Activated naive CD4-positive, alpha-beta T cell treated with anti-CD3 and anti-CD28 coated beads for 36 hours (primary cell): ENCODE measurements at regions of chr11 and their contacts with region 1.

Region 1: GRCh38 chr11:45655347-45655756 is 10.1 kb downstream of the CHST1 start:
- DNase-seq: peak; percentile 75
- H3K4me3 Mint-ChIP-seq: no peak overlapping the region
- H3K27ac Mint-ChIP-seq: no peak overlapping the region
- H3K4me1 Mint-ChIP-seq: peaks cover 3% of the 10 kb centered on the region
- H3K27me3 Mint-ChIP-seq: peaks cover 15% of the 10 kb centered on the region

Region 2: GRCh38 chr11:45339729-45340519 is 315.4 kb before region 1 on chr11:
- CTCF ChIA-PET with region 1: interaction called, 7 read pairs
- intact Hi-C with region 1: loop called (anchors 1 kb)
- DNase-seq: peak; percentile 96
- H3K4me3 Mint-ChIP-seq: peak overlapping the region; percentile 53
- H3K27ac Mint-ChIP-seq: no peak overlapping the region
- H3K4me1 Mint-ChIP-seq: peaks cover 8% of the 10 kb centered on the region
- H3K27me3 Mint-ChIP-seq: peaks cover 3% of the 10 kb centered on the region

Region 3: DNA sequence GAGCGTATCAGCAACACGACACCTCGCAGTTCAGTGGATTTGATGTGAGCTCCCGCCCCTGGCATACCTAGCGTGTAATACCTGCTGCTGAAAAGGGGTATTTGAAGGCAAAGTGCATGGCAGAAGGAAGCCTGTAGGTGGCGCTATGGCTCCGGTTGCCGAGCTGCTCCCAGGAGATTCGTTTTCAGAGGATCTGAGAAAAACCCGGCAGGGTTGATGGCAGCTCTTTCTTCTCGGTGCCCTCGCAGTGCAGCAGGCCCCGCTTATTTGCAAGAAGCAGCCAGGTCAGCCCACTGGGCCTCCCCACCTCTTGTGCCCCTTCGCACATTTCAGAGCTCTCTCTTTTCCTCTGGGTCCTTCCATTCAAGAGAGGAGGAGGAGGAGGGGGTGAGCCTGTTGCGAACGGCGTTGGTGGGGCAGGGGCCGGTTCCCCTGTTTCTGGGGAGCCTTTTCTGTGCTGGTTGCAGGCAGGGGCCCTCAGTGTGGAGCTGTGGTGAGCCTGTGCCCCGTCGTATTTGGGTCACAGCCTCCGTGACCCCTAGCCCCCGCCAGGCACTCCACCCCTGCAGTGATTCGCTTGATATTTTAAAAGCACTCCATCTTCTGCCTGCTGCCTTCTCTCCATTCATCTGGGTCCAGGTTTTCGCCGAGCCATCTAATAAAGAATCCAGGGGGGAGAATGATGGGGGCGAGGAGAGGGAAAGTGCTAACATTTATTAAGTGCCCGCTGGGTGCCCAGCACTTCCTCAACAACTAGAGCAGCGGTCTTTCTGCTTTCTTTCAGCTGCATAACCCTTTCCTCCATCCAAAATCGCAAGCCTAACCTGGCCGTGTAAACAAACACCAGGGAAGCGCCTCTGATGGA is 283.9 kb before region 1 on chr11:
- CTCF ChIA-PET with region 1: interaction called, 50 read pairs
- intact Hi-C with region 1: loop called (anchors 1 kb)
- DNase-seq: peak; percentile 84
- H3K4me3 Mint-ChIP-seq: no peak overlapping the region
- H3K27ac Mint-ChIP-seq: no peak overlapping the region
- H3K4me1 Mint-ChIP-seq: peaks cover 13% of the 10 kb centered on the region
- H3K27me3 Mint-ChIP-seq: peaks cover 12% of the 10 kb centered on the region

Region 4: DNA sequence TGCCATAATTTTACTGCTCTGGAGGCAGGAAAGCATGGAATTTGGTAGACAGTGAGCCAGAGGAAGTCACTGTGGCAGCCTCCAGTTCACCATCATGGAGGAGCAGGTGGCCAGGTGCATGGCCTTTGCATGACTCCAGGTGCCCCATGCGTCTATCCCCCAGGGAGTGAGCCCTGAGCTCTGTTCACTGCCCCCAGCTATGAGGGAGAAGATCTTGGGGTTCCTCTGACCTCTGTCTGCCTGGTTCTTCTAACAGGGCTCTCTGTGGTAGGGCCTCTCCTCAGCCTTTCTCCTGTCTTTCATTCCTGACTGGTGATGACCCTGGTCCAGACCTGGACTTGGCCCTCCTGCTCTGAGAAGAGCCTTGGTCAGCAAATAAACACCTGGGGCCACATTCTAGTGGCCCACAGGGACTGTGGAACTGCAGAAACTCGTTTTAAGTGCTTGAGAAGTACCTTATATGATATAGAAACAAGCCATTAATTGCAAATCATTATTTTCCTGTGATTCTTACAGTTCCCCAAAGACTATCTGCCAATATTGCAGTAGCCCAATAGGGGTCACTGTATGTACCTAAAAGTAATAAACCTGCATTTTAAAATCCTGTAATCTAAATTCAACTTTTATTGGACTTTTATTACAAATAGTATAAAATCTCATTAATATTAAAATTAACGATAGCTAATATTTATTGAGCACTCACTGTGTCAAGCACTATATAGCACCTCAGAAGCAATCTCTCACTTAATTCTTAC is 249.3 kb before region 1 on chr11:
- CTCF ChIA-PET with region 1: interaction called, 8 read pairs
- intact Hi-C with region 1: loop called (anchors 1 kb)
- DNase-seq: no peak
- H3K4me3 Mint-ChIP-seq: no peak overlapping the region
- H3K27ac Mint-ChIP-seq: no peak overlapping the region
- H3K4me1 Mint-ChIP-seq: no peaks in the 10 kb centered on the region
- H3K27me3 Mint-ChIP-seq: peaks cover 17% of the 10 kb centered on the region

Region 5: DNA sequence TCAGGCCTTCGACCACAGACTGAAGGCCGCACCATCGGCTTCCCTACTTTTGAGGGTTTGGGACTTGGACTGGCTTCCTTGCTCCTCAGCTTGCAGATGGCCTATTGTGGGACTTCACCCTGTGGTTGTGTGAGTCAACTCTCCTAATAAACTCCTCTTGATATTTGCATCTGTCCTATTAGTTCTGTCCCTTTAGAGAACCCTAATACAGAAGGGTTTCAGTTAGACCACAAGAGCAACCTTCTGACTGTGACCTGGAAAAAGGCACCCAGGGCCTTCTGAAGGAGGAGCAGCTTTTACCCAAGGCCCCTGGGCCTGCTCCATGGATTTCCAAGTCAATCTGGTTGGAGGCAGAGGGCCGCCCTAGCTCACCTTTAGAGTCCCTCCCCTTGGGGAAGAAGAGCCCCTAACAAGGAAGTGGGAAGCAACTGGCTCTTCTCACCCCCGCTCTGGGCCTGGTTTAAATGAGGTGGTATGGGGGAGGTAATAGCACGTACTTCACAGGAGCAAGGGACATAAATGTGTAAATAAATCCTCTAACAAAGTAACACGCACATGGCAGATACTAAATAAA is 21.3 kb after region 1 on chr11:
- CTCF ChIA-PET with region 1: interaction called, 10 read pairs
- intact Hi-C with region 1: no loop called
- DNase-seq: no peak
- H3K4me3 Mint-ChIP-seq: no peak overlapping the region
- H3K27ac Mint-ChIP-seq: no peak overlapping the region
- H3K4me1 Mint-ChIP-seq: no peaks in the 10 kb centered on the region
- H3K27me3 Mint-ChIP-seq: no peaks in the 10 kb centered on the region

Region 6: DNA sequence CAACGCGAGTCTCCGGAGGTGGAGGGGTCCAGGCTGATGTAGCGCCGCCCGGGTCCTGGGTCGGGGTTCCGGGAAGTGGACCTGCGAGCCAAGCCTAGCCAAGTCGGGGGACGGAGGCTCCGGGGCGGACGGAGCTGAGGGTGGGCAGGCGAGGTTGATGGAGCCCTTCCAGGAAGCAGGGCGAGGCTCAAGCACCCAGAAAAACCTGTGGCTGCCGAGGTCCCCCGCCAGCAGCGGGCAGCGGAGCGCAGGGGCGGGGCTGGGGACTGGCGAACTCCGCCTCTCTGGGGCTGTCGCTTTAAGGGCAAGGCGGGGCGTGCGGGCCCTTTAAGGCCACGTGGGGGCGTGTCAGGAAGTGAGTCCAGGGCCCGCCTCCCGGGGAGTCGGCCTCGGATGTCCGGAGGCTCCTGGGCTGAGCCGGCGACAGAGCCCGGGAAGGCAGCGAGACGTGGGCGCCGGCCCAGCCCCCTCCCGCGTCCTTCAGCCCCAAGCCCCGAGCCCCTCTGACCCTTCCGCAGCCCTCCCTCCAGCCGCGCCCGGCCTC is 149.5 kb after region 1 on chr11 and contains the start of gene SLC35C1:
- CTCF ChIA-PET with region 1: no interaction called
- intact Hi-C with region 1: no loop called
- DNase-seq: peak; percentile 97
- H3K4me3 Mint-ChIP-seq: peak within 1 kb of the TSS; percentile 90
- H3K27ac Mint-ChIP-seq: peak within 1 kb of the TSS; percentile 81
- H3K4me1 Mint-ChIP-seq: peaks cover 36% of the 10 kb centered on the region
- H3K27me3 Mint-ChIP-seq: no peaks in the 10 kb centered on the region
- total RNA-seq, gene SLC35C1: 5.6 to 6.5 TPM